ENCODE measurements at regions of chr1 and their contacts with region 1.

Region 1: GRCh38 chr1:23772049-23772853 is 6.0 kb upstream of the PITHD1 start:
- DNase-seq: peak; percentile 76
- ATAC-seq: peak; percentile 100
- H3K4me3 Mint-ChIP-seq: no peak overlapping the region
- H3K27ac Mint-ChIP-seq: no peak overlapping the region
- H3K4me1 Mint-ChIP-seq: peaks cover 10% of the 10 kb centered on the region
- H3K27me3 Mint-ChIP-seq: no peaks in the 10 kb centered on the region
- CTCF ChIP-seq: peak; percentile 68

Region 2: DNA sequence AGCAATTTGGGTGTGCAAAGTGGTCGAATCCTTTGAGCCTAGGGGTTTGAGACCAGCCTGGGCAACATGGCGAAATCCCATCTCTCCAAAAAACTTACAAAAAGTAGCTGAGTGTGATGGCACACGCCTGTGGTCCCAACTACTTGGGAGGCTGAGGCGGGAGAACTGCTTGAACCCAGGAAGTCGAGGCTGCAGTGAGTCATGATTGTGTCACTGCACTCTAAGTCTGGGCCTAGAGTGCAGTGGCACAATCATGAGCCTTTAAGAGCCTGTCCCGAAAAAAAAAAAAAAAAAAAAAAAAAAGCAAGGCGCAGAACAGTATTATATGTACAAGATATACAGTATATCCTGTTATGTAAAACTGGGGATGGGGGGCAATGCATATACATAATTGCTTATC is 529.8 kb before region 1 on chr1:
- CTCF ChIA-PET with region 1: no interaction called
- POLR2A ChIA-PET with region 1: no interaction called
- intact Hi-C with region 1: no loop called
- DNase-seq: no peak
- ATAC-seq: no peak
- H3K4me3 Mint-ChIP-seq: no peak overlapping the region
- H3K27ac Mint-ChIP-seq: no peak overlapping the region
- H3K4me1 Mint-ChIP-seq: no peaks in the 10 kb centered on the region
- H3K27me3 Mint-ChIP-seq: peaks cover 5% of the 10 kb centered on the region
- CTCF ChIP-seq: no peak

Region 3: DNA sequence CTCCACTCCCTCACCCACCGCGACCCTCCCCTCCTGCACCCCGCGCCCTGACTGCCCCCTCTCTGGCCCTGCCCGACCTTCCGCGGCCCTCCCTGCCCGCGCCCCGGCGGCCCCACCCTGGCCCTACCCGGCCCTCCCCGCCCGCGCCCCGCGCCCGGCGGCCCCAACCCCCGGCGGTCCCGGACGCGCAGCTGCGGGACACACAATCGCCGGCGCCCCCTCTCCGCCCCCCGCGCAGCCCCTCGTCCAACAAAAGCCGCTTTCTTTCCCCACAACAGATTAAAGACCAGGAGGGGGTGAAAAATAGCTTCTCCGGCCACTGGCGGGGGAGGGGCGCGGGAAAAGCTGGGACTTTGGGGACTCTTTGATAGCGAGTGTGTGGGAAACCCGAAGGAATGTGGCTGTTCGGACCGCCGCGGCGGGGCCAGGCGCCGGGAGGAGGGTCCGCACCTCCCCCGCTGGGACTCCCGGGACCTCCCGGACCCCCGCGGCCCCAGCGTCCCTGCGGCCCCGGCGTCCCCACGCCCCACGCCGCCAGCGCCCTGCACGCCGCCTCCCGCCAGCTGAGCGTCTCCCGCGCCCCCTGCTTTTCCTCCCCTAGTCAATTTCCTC is 204.1 kb before region 1 on chr1:
- CTCF ChIA-PET with region 1: no interaction called
- POLR2A ChIA-PET with region 1: no interaction called
- intact Hi-C with region 1: no loop called
- DNase-seq: no peak
- ATAC-seq: peak; percentile 29
- H3K4me3 Mint-ChIP-seq: peak overlapping the region; percentile 93
- H3K27ac Mint-ChIP-seq: peak overlapping the region; percentile 92
- H3K4me1 Mint-ChIP-seq: peaks cover 61% of the 10 kb centered on the region
- H3K27me3 Mint-ChIP-seq: no peaks in the 10 kb centered on the region
- CTCF ChIP-seq: no peak

Region 4: GRCh38 chr1:23854568-23854967 is 82.3 kb after region 1 on chr1:
- CTCF ChIA-PET with region 1: interaction called, 8 read pairs
- POLR2A ChIA-PET with region 1: no interaction called
- intact Hi-C with region 1: loop called (anchors 1 kb)
- DNase-seq: no peak
- ATAC-seq: no peak
- H3K4me3 Mint-ChIP-seq: no peak overlapping the region
- H3K27ac Mint-ChIP-seq: no peak overlapping the region
- H3K4me1 Mint-ChIP-seq: no peaks in the 10 kb centered on the region
- H3K27me3 Mint-ChIP-seq: no peaks in the 10 kb centered on the region
- CTCF ChIP-seq: no peak

Region 5: DNA sequence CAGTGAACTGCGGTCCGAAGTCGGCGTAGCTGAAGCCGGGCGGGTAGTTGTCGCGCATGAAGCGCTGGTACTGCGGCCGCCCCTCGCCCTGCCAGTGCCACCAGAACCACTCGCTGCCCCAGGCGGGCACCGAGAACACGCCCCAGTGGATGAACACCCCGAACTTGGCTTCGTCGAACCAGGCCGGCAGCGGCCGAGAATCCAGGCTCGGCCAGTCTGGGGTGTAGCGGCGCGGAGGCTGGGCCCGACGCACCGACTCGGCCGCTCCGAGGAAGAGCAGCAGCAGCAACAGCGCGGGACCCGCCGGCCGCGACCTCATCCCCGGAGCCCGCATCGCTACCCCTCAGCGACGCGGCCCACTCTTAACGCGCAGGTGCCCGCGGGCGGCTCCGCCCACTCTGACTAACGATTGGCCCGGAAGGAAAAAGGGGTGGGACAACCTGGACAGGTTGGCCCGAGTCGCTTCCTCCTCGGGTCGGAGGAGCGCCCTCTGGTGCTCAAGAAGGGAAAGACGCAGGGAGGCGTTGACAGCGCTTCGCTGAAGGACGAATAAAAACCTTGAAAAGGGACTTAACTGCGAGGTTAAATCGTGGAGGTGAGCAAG is 95.8 kb after region 1 on chr1 and contains the start of gene FUCA1:
- CTCF ChIA-PET with region 1: interaction called, 3 read pairs
- POLR2A ChIA-PET with region 1: no interaction called
- intact Hi-C with region 1: loop called (anchors 1 kb)
- DNase-seq: peak; percentile 92
- ATAC-seq: peak; percentile 97
- H3K4me3 Mint-ChIP-seq: peak within 1 kb of the TSS; percentile 84
- H3K27ac Mint-ChIP-seq: peak within 1 kb of the TSS; percentile 87
- H3K4me1 Mint-ChIP-seq: peaks cover 36% of the 10 kb centered on the region
- H3K27me3 Mint-ChIP-seq: no peaks in the 10 kb centered on the region
- CTCF ChIP-seq: no peak
- total RNA-seq, gene FUCA1: 9.5 and 10.7 TPM in 2 replicates

Region 6: DNA sequence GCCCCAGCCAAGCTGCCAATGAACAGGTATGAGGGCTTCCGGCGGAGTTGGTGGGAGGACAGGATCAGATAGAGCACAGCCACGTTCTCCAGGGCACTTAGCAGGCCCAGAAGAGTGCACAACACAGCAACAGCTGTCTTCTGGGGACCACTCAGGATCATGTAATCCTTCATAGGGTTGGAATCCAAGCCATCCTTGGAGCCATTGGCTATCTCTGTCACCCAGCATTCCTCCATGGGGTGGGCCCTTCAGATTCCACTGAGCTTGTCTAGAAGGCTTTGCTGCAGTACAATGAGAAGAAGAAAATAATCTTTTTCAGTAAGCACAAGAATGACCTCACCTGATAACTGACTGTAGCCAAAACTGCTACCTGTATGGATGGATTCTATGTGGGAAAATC is 103.1 kb after region 1 on chr1:
- CTCF ChIA-PET with region 1: no interaction called
- POLR2A ChIA-PET with region 1: interaction called, 11 read pairs
- intact Hi-C with region 1: no loop called
- DNase-seq: no peak
- ATAC-seq: no peak
- H3K4me3 Mint-ChIP-seq: no peak overlapping the region
- H3K27ac Mint-ChIP-seq: no peak overlapping the region
- H3K4me1 Mint-ChIP-seq: peaks cover 10% of the 10 kb centered on the region
- H3K27me3 Mint-ChIP-seq: no peaks in the 10 kb centered on the region
- CTCF ChIP-seq: no peak

Region 7: DNA sequence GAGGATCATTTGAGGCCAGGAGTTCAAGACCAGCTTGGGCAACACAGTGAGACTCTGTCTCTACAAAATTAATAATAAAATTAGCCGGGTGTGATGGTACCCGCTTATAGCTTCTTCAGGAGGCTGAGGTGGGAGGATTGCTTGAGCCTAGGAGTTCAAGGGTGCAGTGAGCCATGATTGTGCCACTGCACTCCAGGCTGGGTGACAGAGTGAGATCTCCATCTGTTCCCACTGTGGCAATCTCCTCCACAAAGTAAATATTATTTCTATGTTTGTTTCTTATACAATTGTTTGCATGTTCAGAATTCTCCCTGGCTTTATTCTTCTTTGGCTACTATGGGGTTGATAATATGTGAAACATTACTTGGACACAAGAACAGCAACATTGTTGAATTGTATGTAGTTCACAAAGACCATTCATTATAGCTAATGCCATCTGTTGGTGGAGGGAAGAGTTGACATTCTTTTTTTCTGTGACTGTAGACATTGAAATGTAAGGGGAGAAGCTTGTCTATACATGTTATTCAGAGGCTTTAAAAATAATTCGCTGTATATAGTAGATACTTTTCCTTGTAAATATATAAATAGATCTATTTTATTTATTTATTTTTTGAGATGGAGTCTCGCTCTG is 255.7 kb after region 1 on chr1:
- CTCF ChIA-PET with region 1: interaction called, 16 read pairs
- POLR2A ChIA-PET with region 1: no interaction called
- intact Hi-C with region 1: loop called (anchors 1 kb)
- DNase-seq: no peak
- ATAC-seq: no peak
- H3K4me3 Mint-ChIP-seq: no peak overlapping the region
- H3K27ac Mint-ChIP-seq: no peak overlapping the region
- H3K4me1 Mint-ChIP-seq: peaks cover 6% of the 10 kb centered on the region
- H3K27me3 Mint-ChIP-seq: no peaks in the 10 kb centered on the region
- CTCF ChIP-seq: no peak